ENCODE measurements at regions of chr12 and their contacts with region 1.

Region 1: GRCh38 chr12:13289653-13290289 is 93.2 kb downstream of the EMP1 start:
- DNase-seq: no peak
- ATAC-seq: peak in 2 of 8 donors; percentile 38 to 88
- H3K4me3 ChIP-seq: no peak overlapping the region
- H3K27ac ChIP-seq: no peak overlapping the region
- H3K4me1 ChIP-seq: peaks cover 0 to 5% (median 0%) of the 10 kb centered on the region in 9 donors
- H3K27me3 ChIP-seq: peaks cover 0 to 8% (median 0%) of the 10 kb centered on the region in 7 donors
- CTCF ChIP-seq: no peak

Region 2: DNA sequence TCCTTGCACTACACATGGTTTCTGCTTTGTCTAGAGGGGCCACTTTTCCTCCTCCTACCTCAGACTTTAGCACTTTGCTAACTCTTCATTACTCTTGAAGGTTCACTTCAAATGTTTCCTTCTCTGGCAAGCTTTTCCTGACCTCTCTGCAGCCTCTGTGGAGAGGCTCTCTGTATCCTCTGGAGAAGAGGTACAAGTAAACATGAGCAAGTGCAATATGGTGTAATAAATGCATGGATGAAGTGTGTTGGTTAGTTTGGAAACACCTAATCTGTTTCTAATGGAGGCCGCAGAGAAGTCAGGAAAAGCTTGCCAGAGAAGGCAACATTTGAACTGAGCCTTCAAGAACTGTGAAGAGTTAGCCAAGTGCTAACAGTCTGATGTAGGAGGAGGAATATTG is 362.3 kb after region 1 on chr12:
- intact Hi-C with region 1: loop called in 1 of 10 experiments (anchors 10 kb)
- DNase-seq: no peak
- ATAC-seq: no peak
- H3K4me3 ChIP-seq: no peak overlapping the region
- H3K27ac ChIP-seq: no peak overlapping the region
- H3K4me1 ChIP-seq: no peaks in the 10 kb centered on the region
- H3K27me3 ChIP-seq: peaks cover 0 to 18% (median 1%) of the 10 kb centered on the region in 7 donors
- CTCF ChIP-seq: no peak